Activated T-helper 1 cell treated with anti-CD3 and anti-CD28 coated beads, Interleukin-12 subunit alpha, Interleukin-12 subunit beta, Interleukin-2, Interleukin-4 antibody, amounts not matched to agents 30 ng/mL and 10 ng/mL and 1 ng/mL, durations not matched to agents 14 hours and 24 hours and 36 hours (primary cell): ENCODE measurements at regions of chr5 and their contacts with region 1.

Region 1: DNA sequence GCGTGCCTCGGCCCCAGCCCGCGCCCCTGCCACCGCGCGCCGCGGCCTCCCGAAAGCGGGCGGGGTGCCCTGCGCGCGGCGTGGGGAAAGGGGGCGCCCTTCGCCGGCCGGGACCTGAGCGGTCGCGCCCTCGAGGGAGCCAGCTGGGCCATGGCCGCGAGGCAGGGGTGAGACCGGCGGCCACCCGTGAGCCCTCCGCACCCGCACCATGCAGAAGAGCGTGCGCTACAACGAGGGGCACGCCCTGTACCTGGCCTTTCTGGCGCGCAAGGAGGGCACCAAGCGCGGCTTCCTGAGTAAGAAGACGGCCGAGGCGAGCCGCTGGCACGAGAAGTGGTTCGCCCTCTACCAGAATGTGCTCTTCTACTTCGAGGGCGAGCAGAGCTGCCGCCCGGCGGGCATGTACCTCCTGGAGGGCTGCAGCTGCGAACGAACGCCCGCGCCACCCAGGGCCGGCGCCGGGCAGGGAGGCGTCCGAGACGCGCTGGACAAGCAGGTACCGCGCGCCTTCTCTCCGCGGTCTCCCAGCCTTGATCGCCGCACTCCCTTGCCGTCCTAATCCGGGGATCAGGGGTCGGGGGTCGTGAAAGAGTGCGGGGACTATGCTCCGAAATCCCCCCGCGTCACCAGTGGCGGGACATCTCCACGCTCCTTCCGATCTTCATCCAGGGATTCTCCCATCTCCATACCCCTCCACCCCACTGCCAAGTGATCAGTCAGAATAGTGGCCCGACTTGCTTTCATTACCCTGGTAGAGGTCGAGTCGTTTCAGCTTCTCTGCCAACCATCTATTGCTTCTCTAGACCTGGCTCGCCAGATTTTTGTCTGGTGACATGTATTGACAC is 590 bp downstream of the RASGRF2 start:
- DNase-seq: peak; percentile 20
- H3K4me3 Mint-ChIP-seq: peak overlapping the region; percentile 90
- H3K27ac Mint-ChIP-seq: peak overlapping the region; percentile 86
- H3K4me1 Mint-ChIP-seq: peaks cover 60% of the 10 kb centered on the region
- H3K27me3 Mint-ChIP-seq: no peaks in the 10 kb centered on the region

Region 2: GRCh38 chr5:80686757-80687156 is 274.0 kb before region 1 on chr5:
- intact Hi-C with region 1: loop called (anchors 1 kb)
- DNase-seq: no peak
- H3K4me3 Mint-ChIP-seq: no peak overlapping the region
- H3K27ac Mint-ChIP-seq: no peak overlapping the region
- H3K4me1 Mint-ChIP-seq: peaks cover 34% of the 10 kb centered on the region
- H3K27me3 Mint-ChIP-seq: no peaks in the 10 kb centered on the region

Region 3: DNA sequence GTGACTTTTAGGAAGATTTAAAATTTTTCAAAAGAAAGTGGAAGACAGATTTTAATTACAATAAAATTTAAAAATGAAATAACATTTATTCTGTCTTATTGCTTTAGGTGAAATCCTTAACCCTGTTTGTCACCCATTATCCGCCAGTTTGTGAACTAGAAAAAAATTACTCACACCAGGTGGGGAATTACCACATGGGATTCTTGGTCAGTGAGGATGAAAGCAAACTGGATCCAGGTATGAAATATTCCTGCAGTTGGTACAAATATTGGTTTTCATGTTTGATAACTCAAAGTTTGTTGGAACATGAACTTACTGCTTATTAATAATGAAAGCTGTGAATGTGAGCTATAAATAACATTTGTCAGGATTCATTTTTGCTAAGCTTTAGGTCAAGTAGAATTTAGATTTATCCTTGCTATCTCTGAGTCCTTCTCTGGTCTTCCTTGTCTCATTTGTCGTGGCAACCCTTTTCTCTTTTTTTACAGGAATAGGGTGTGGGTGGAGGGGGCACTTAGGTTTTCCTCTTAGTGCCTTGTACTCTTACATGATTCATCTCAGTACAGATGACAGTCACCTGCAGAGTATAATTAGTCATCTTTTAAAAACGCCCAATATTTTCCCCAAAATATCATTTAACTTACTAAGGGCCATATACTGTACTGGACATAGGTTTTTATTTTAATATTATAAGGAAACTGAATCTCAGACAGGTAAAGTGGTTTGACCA is 95.9 kb before region 1 on chr5:
- intact Hi-C with region 1: loop called (anchors 2 kb)
- DNase-seq: no peak
- H3K4me3 Mint-ChIP-seq: peak overlapping the region; percentile 3
- H3K27ac Mint-ChIP-seq: peak overlapping the region; percentile 38
- H3K4me1 Mint-ChIP-seq: peaks cover 65% of the 10 kb centered on the region
- H3K27me3 Mint-ChIP-seq: no peaks in the 10 kb centered on the region

Region 4: GRCh38 chr5:80941551-80941950 is 19.2 kb before region 1 on chr5:
- intact Hi-C with region 1: no loop called
- DNase-seq: no peak
- H3K4me3 Mint-ChIP-seq: no peak overlapping the region
- H3K27ac Mint-ChIP-seq: no peak overlapping the region
- H3K4me1 Mint-ChIP-seq: no peaks in the 10 kb centered on the region
- H3K27me3 Mint-ChIP-seq: peaks cover 2% of the 10 kb centered on the region

Region 5: DNA sequence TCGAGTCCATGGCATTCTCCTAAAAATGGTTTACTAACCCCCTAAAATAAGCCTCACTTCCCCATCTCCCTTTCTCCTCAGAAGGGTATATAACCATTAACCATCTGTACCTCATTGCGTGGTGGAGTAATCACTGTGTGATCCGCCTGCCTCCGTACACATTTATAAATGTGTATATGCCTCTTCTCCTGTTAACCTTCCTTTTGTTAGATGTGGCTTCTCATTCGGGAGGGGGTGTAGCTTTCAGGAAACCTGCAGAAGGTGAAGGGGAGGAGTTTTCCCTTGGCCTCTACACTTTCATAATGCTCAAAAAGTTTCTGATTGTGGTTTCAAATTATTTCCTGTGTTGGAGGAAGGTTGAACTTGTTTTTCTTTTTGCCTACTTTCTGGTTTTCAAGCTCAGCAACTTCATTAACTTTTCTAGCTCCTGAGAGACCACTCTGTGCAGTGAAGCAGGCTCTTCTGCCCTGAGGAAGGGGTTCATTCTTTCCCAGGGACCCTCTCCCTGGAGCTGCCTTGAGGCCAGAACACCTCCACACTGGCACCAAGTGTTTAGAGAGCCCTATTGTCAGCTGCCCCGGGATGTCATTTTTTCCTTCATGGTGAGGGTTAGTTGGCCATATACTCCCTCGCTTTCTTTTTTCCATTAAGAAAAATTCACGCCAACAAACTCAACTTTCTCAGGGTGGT is 46.3 kb after region 1 on chr5:
- intact Hi-C with region 1: loop called (anchors 1 kb)
- DNase-seq: peak; percentile 50
- H3K4me3 Mint-ChIP-seq: peak overlapping the region; percentile 71
- H3K27ac Mint-ChIP-seq: peak overlapping the region; percentile 81
- H3K4me1 Mint-ChIP-seq: peaks cover 54% of the 10 kb centered on the region
- H3K27me3 Mint-ChIP-seq: no peaks in the 10 kb centered on the region

Region 6: GRCh38 chr5:81020478-81021174 is 59.9 kb after region 1 on chr5:
- intact Hi-C with region 1: loop called (anchors 1 kb)
- DNase-seq: no peak
- H3K4me3 Mint-ChIP-seq: no peak overlapping the region
- H3K27ac Mint-ChIP-seq: no peak overlapping the region
- H3K4me1 Mint-ChIP-seq: peaks cover 61% of the 10 kb centered on the region
- H3K27me3 Mint-ChIP-seq: no peaks in the 10 kb centered on the region

Region 7: DNA sequence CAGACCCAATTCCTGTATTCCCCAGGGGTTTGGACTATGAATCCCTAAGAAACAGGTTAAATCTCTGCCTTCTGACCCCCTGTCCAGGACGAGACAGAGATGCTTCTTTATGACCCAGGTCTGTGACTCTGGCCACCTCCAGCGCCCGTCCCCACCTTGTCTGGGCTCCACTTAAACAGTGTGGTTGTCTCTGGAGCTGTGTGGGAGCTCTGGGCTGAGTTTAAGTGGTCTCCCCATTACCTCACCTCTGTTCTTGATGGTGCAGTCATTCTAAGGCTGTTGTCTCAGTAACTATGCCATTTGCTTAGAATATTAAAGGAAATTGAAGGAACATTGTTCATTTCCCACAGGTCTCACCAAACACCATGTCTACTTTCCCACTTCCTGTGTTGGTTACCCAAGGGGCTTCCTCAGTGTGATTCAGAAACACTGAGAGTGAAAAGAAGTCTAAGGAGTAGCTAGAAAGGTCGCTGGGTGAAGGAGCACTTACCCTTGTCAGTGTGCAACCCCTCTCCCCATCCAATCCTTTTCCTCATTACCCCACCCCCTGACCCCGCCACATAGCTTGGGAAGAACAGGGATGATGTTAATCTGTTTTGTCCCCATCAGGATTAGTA is 144.6 kb after region 1 on chr5:
- intact Hi-C with region 1: loop called (anchors 1 kb)
- DNase-seq: no peak
- H3K4me3 Mint-ChIP-seq: peak overlapping the region; percentile 15
- H3K27ac Mint-ChIP-seq: no peak overlapping the region
- H3K4me1 Mint-ChIP-seq: peaks cover 32% of the 10 kb centered on the region
- H3K27me3 Mint-ChIP-seq: no peaks in the 10 kb centered on the region

Region 8: DNA sequence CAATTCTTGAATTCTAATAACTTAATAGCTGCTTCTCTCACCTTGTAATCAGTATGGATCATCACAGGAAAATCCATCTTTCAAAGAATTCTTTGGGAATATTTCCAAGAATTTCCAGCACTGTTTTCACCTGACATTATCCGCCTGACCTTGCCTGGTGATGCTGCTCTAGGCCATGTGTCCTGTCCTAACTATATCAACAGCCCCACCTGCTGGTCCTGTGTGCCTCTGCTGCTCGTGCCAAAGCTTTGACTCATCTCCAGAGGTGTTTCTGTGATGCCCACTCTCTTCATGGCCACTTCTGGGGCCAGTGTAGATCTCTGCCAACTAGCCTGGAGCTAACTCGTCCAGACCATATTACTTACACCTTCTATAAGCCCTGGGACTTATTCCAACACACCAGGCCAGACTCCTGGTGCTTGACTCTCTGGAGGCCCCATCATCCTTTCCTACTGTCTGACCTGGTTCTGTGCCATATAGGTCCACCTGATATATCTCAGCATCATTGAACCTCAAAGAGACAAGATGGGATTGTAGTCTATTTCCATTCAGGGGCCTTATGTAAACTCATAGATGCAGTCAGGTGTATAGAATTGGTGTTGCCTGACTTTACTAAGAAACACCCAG is 204.9 kb after region 1 on chr5:
- intact Hi-C with region 1: loop called (anchors 1 kb)
- DNase-seq: peak; percentile 34
- H3K4me3 Mint-ChIP-seq: no peak overlapping the region
- H3K27ac Mint-ChIP-seq: no peak overlapping the region
- H3K4me1 Mint-ChIP-seq: peaks cover 14% of the 10 kb centered on the region
- H3K27me3 Mint-ChIP-seq: no peaks in the 10 kb centered on the region